Aorta (tissue), 5 donors: ENCODE measurements at regions of chr1 and their contacts with region 1.

Region 1: DNA sequence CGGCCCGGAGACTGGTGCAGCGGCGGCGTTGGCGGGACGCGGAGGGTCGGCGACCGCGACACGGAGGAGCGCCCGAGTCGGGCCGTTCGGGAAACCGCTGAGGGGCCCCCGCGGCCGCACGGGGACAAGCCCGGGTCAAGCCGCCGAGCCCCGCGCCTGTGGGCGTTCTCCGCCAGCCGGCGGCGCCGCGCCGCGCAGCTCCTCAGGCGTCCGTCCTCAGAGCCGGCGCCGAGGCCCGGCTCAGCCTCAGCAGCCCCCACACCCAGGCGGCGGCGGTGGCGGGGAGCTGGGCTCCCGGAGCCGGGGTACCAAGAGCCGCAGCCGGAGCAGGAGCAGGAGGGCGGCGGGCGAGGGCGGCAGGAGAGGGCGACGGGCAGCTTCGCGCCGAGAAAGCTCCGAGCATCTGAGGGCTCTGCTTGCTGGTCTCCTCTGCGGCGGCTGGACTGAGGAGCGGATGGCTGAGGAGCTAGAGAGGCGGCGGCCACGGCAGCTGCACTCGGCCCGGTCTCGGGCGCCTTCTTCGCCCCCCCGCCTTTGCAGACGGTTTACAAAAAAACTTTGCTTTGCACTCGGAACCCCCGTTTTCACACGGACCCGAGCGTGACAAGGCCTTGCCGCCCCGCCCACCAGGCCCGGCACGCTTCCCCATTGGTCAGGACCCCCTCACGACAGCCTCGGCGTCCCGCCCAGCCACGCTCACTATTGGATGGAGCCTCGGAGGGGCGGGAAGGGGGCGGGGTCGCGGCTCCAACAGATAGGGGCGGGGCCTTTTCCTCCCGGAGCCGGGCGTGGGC is at the start of gene SLC30A1:
- DNase-seq: peak; percentile 100
- ATAC-seq: peak; percentile 96
- H3K4me3 ChIP-seq: peak within 1 kb of the TSS; percentile 95 to 97
- H3K27ac ChIP-seq: peak within 1 kb of the TSS; percentile 94 to 98
- H3K4me1 ChIP-seq: peaks cover 2 to 7% of the 10 kb centered on the region in 2 donors
- H3K27me3 ChIP-seq: no peaks in the 10 kb centered on the region
- total RNA-seq, gene SLC30A1: 17.0 to 24.4 TPM

Region 2: DNA sequence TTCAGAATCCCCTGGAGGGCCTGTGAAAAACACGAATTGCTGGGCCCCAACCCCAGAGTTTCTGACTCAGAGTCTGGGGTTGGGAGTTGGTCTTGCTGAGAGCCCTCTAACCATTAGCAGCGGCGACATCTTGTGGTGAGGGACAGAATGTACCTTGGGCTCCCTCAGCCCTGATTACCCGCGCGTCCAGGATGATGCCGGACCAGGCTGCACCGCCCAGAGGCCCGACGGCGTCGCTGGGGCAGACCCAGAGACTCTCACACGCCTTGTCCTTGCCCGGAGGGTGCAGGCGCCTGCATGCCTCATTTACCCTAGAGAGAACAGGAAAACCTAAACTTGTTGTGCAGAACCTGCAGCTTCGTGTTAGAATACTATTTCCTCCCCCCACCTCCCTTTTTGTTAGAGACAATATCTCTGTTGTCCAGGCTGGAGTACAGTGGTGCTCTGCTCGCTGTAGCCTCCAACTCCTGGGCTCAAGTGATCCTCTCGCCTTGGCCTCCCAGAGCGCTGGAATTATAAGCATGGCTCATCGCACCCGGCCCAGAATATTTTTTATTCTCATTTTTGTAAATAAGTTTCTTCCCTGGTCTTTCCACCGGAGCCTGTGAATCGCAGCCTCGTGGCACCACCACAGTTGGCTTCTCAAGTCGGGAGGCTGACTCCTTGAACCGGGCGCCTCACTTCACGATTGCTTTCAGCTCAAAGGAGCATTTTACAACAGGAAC is 64.6 kb before region 1 on chr1:
- intact Hi-C with region 1: loop called (anchors 2 to 5 kb)
- DNase-seq: peak; percentile 90 to 92
- ATAC-seq: peak; percentile 89
- H3K4me3 ChIP-seq: no peak overlapping the region
- H3K27ac ChIP-seq: no peak overlapping the region
- H3K4me1 ChIP-seq: no peaks in the 10 kb centered on the region
- H3K27me3 ChIP-seq: no peaks in the 10 kb centered on the region

Region 3: GRCh38 chr1:211613093-211613947 is 34.5 kb after region 1 on chr1:
- intact Hi-C with region 1: loop called (anchors 2 to 5 kb)
- DNase-seq: peak; percentile 93 to 95
- ATAC-seq: peak; percentile 89
- H3K4me3 ChIP-seq: no peak overlapping the region
- H3K27ac ChIP-seq: peak overlapping the region in 1 of 2 donors; percentile 65
- H3K4me1 ChIP-seq: no peaks in the 10 kb centered on the region
- H3K27me3 ChIP-seq: no peaks in the 10 kb centered on the region

Region 4: DNA sequence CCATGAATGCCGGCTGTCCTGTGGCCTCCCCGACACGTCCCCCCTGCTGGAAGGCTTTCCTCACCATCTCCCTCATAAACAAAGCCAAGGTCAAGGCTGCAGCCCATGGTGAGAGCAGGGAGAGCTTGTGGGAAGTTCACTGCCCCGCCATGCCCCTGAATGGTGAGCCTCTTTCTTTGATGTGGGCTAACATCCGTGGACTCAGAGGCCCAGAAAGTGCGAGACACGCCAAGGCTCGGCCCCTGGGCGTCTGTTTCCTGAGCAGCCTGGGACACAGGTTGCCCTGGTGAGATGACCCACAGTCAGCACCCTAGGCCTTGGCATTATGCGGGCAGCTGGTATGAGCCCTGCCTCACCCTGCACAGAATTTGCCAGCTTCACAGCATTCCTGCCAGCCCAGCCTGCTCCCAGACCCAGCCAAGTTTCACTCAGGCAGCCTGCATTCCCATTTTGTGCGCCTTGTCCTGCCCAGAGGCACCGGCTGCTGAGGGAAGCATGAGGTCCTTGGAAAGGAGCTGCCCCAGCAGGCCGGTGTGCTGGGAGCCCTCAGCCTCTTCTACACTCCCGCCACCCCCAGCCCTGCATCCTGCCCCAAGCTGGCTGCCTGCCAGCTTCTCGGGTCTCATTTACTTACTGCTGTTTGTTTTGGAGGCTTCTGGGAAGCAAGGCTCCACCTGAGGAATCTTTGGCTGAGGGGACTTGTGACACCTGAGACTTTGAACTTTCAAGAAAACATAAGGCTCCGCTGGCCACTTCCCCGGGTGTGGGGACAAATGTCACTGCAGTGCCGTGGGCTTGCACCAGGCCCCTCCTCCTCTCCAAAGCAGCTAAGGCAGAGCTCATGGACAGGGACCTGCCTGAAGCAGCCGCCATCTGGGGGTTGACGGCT is 64.7 kb after region 1 on chr1:
- intact Hi-C with region 1: loop called in 1 of 2 experiments (anchors 2 kb)
- DNase-seq: peak; percentile 83 to 87
- ATAC-seq: peak; percentile 78
- H3K4me3 ChIP-seq: no peak overlapping the region
- H3K27ac ChIP-seq: peak overlapping the region; percentile 4 to 86
- H3K4me1 ChIP-seq: no peaks in the 10 kb centered on the region
- H3K27me3 ChIP-seq: no peaks in the 10 kb centered on the region

Region 5: GRCh38 chr1:211654838-211655787 is 76.3 kb after region 1 on chr1:
- intact Hi-C with region 1: loop called (anchors 1 to 2 kb)
- DNase-seq: peak; percentile 92 to 97
- ATAC-seq: peak; percentile 92
- H3K4me3 ChIP-seq: no peak overlapping the region
- H3K27ac ChIP-seq: no peak overlapping the region
- H3K4me1 ChIP-seq: no peaks in the 10 kb centered on the region
- H3K27me3 ChIP-seq: no peaks in the 10 kb centered on the region